ENCODE measurements at regions of chr12 and their contacts with region 1.

Region 1: GRCh38 chr12:65602610-65603295 is 221.5 kb upstream of the HMGA2 start:
- DNase-seq: peak; percentile 74 to 97
- H3K4me3 ChIP-seq: peak overlapping the region; percentile 53; the same call in 1 of the 2 replicates
- H3K27ac ChIP-seq: peak overlapping the region; percentile 82
- H3K4me1 ChIP-seq: peaks cover 70% of the 10 kb centered on the region
- H3K27me3 ChIP-seq: no peaks in the 10 kb centered on the region
- CTCF ChIP-seq: peak; percentile 94

Region 2: GRCh38 chr12:65306366-65307168 is 296.2 kb before region 1 on chr12:
- CTCF ChIA-PET with region 1: no interaction called
- POLR2A ChIA-PET with region 1: no interaction called
- intact Hi-C with region 1: loop called (anchors 2 kb)
- DNase-seq: peak in 1 of 2 experiments; percentile 32
- H3K4me3 ChIP-seq: no peak overlapping the region
- H3K27ac ChIP-seq: no peak overlapping the region
- H3K4me1 ChIP-seq: no peaks in the 10 kb centered on the region
- H3K27me3 ChIP-seq: no peaks in the 10 kb centered on the region
- CTCF ChIP-seq: peak; percentile 76

Region 3: GRCh38 chr12:65631621-65632111 is 28.9 kb after region 1 on chr12:
- CTCF ChIA-PET with region 1: interaction called, 3 read pairs
- POLR2A ChIA-PET with region 1: no interaction called
- intact Hi-C with region 1: loop called (anchors 1 kb)
- DNase-seq: peak; percentile 66 to 100
- H3K4me3 ChIP-seq: peak overlapping the region; percentile 16; the same call in 1 of the 2 replicates
- H3K27ac ChIP-seq: peak overlapping the region; percentile 99
- H3K4me1 ChIP-seq: peaks cover 72% of the 10 kb centered on the region
- H3K27me3 ChIP-seq: no peaks in the 10 kb centered on the region
- CTCF ChIP-seq: no peak

Region 4: DNA sequence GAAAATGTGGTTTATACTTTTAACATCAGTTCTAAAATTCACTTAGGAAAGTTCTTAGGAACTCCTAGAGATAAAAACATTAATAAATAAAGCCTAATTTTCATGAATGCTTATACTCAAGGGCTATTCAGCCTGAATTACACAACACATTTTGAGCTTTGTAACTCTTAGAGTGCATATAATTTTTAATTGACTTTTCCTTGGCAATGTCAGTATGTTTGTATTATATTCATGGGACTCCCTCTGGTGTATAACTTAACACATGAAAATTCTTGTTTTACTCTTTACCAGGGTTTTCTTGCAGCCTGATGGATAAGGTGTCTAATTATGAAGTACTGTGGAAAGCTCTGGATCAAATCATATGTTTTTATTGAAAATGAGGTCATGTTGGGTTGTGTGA is 71.0 kb after region 1 on chr12:
- CTCF ChIA-PET with region 1: no interaction called
- POLR2A ChIA-PET with region 1: no interaction called
- intact Hi-C with region 1: loop called (anchors 5 kb)
- DNase-seq: no peak
- H3K4me3 ChIP-seq: no peak overlapping the region
- H3K27ac ChIP-seq: no peak overlapping the region
- H3K4me1 ChIP-seq: peaks cover 5% of the 10 kb centered on the region; the same call in 1 of the 2 replicates
- H3K27me3 ChIP-seq: no peaks in the 10 kb centered on the region
- CTCF ChIP-seq: peak; percentile 42; the same call in 1 of the 2 replicates

Region 5: GRCh38 chr12:65756956-65757511 is 154.3 kb after region 1 on chr12:
- CTCF ChIA-PET with region 1: no interaction called
- POLR2A ChIA-PET with region 1: no interaction called
- intact Hi-C with region 1: no loop called
- DNase-seq: peak in 1 of 2 experiments; percentile 94
- H3K4me3 ChIP-seq: no peak overlapping the region
- H3K27ac ChIP-seq: peak overlapping the region; percentile 60
- H3K4me1 ChIP-seq: peaks cover 27% of the 10 kb centered on the region
- H3K27me3 ChIP-seq: no peaks in the 10 kb centered on the region
- CTCF ChIP-seq: no peak

Region 6: DNA sequence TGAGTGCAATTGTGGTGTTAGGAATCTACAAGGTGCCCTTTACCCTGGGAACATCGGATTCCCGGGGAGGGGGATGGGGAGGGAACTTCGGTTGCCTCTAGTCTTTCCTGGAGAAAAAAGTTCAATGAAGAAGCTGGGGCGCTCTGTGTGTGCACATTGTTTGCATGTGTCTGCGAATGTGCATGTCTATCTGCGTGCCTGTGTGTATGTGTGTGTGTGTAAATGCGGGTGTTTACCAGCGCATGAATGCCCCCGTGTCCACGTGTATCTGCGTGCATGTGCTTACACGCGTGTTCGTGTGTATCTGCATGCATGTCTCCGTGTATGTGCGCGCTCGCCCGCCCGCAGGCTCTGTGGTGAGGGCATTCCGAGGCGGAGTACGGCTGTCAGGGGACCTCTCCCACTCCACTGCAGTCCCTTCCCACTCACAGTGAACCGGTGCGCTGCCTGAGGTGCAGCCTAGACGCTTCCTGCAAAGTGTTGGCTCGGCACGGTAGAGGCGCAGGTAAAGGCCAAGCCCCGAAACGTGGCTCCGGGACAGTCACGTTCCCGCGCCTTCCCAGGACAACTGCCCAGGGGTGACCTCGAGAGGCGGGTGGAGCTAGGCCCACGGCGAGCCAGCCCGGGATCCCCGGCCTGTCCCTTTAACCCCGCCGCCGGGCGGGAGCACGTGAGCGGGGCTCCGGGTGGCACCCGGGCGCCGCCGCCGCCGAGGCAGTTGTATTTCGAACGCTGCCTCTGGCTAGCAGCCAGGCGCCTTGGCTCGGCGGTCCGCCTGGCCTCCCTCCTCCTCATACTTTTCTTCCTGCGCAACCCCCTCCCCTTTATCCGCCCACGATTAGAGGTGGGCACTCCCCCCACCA is 221.0 kb after region 1 on chr12:
- CTCF ChIA-PET with region 1: no interaction called
- POLR2A ChIA-PET with region 1: no interaction called
- intact Hi-C with region 1: loop called (anchors 1 kb)
- DNase-seq: peak; percentile 54 to 61
- H3K4me3 ChIP-seq: peak overlapping the region; percentile 93
- H3K27ac ChIP-seq: peak overlapping the region; percentile 88
- H3K4me1 ChIP-seq: peaks cover 49% of the 10 kb centered on the region
- H3K27me3 ChIP-seq: no peaks in the 10 kb centered on the region
- CTCF ChIP-seq: no peak

Region 7: GRCh38 chr12:65986047-65986446 is 383.3 kb after region 1 on chr12:
- CTCF ChIA-PET with region 1: no interaction called
- POLR2A ChIA-PET with region 1: no interaction called
- intact Hi-C with region 1: loop called (anchors 1 kb)
- DNase-seq: peak in 1 of 2 experiments; percentile 32
- H3K4me3 ChIP-seq: no peak overlapping the region
- H3K27ac ChIP-seq: no peak overlapping the region
- H3K4me1 ChIP-seq: no peaks in the 10 kb centered on the region
- H3K27me3 ChIP-seq: no peaks in the 10 kb centered on the region
- CTCF ChIP-seq: no peak

Region 8: GRCh38 chr12:66087365-66087943 is 484.7 kb after region 1 on chr12:
- CTCF ChIA-PET with region 1: no interaction called
- POLR2A ChIA-PET with region 1: no interaction called
- intact Hi-C with region 1: loop called (anchors 1 kb)
- DNase-seq: peak in 1 of 2 experiments; percentile 56
- H3K4me3 ChIP-seq: no peak overlapping the region
- H3K27ac ChIP-seq: no peak overlapping the region
- H3K4me1 ChIP-seq: no peaks in the 10 kb centered on the region
- H3K27me3 ChIP-seq: no peaks in the 10 kb centered on the region
- CTCF ChIP-seq: peak; percentile 80

Measured in PC-9 (cell line).